Posterior cingulate gyrus (tissue), 11 donors: ENCODE measurements at regions of chr13 and their contacts with region 1.

Region 1: DNA sequence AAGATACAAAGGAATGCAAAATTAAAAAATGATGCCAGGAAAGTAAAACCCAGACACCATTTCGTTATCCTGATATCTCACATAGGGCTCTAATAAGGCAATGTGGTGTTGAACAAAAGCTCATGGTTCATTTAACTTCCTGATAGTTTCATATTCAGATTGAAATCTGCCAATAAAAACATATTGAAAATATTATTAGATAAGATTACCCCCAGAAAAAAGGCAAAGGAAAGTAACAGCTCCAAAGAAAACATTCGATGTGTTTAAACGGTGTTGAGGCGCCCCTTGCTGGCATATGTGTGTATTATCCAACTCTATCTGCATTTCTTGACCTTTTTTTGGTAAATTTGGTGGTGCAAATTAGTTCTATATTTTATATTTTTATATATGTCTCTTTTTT is 75.9 kb downstream of the ESD start:
- DNase-seq: peak in 7 of 10 donors; percentile 24 to 87 (median 45)

Region 2: DNA sequence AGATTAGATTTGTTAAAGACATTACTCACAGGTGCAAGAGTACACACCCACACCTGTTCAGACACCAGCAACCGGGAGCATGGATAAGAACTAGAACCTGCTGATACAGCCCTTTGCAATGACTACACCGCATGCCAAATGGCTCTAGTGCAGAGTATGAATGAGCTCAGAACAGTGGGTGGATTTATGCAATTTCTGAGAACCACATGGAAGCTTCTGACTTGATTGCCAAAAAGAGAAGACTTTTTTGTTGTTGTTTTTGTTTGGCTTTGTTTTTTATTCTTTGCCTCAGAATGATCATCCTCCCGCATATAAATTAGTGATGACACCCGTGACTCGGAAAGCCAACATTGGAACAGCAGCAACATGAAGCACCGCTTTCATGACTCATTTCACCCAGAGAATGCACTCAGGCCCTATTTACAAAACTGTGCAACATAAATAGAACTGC is 245.5 kb before region 1 on chr13:
- intact Hi-C with region 1: no loop called
- DNase-seq: no peak

Region 3: GRCh38 chr13:46492946-46493345 is 228.1 kb before region 1 on chr13:
- intact Hi-C with region 1: loop called (anchors 1 kb)
- DNase-seq: no peak

Region 4: DNA sequence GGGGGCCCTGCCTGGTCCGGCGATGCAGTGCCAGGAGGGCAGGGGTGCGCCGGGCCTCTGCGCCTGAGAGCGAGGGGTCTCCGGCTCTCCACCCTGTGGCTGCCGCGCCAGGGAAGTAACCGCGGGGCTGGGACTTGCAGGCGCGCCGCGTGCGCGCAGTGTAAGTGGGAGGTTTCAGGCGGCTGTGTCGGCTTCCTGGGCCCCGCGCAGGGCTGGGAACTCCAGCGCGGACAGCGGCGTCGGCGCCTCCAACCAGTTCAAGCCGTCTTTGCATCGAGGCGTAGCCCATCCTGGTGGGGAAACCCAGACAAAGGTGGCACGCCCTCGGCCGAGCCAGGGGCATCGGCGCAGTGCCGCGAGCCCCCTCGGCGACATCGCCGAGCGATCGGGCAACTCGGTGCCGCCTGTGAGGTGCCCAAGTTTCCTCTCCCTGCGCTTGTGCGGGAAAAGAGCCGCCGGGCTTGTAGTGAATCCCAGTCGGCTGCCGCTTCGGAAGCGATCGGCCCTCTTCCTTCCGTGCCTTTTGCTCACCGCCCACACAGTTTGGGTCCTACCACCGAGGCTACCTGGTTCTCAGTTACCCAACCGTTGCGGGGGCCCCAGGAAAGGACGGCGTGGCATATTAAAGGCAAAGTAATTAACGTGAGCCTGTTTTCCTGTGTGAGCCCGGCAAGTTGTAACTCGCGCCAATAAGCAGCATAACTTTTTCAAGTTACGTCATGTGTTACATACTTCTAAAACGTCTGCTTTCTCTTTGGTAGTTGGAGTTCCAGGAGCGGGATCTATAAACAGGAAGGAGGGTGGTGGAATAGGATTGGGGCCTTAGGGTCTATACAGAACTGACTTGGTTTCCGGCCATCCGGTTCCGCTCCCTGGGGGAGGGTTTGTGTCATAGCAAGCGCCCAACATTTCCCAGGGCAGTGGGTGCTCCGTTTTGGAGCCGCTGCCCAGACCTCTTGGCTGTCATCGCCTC is 166.9 kb before region 1 on chr13:
- intact Hi-C with region 1: loop called (anchors 5 kb)
- DNase-seq: peak in 8 of 10 donors; percentile 23 to 93 (median 60)